HepG2 (cell line): ENCODE measurements at regions of chr6 and their contacts with region 1.

Region 1: GRCh38 chr6:44475779-44476434 is 88.4 kb downstream of the CDC5L start:
- DNase-seq: peak; percentile 59
- ATAC-seq: peak; percentile 95
- H3K4me3 ChIP-seq: peak overlapping the region; percentile 32 to 74 (median 34); a peak in 5 of 6 replicates
- H3K27ac ChIP-seq: no peak overlapping the region
- H3K4me1 ChIP-seq: peaks cover 9% of the 10 kb centered on the region; the same call in 1 of the 2 replicates
- H3K27me3 ChIP-seq: peaks cover 11 to 89% of the 10 kb centered on the region in 2 experiments; a peak in 4 of 5 replicates
- CTCF ChIP-seq: peak; percentile 100
- EP300 ChIP-seq: no peak
- POLR2A ChIP-seq: no peak
- RAD21 ChIP-seq: peak; percentile 96

Region 2: GRCh38 chr6:44494011-44494501 is 18.1 kb after region 1 on chr6:
- CTCF ChIA-PET with region 1: interaction called, 15 read pairs
- POLR2A ChIA-PET with region 1: no interaction called
- in situ Hi-C with region 1: no loop called
- intact Hi-C with region 1: loop called (anchors 2 kb)
- DNase-seq: peak; percentile 80
- ATAC-seq: peak; percentile 95
- H3K4me3 ChIP-seq: no peak overlapping the region
- H3K27ac ChIP-seq: no peak overlapping the region
- H3K4me1 ChIP-seq: peaks cover 13% of the 10 kb centered on the region
- H3K27me3 ChIP-seq: peaks cover 4 to 39% of the 10 kb centered on the region in 2 experiments; a peak in 4 of 5 replicates
- CTCF ChIP-seq: peak; percentile 73
- EP300 ChIP-seq: no peak
- POLR2A ChIP-seq: no peak
- RAD21 ChIP-seq: no peak

Region 3: GRCh38 chr6:44593539-44593944 is 117.6 kb after region 1 on chr6:
- CTCF ChIA-PET with region 1: no interaction called
- POLR2A ChIA-PET with region 1: no interaction called
- in situ Hi-C with region 1: no loop called
- intact Hi-C with region 1: loop called (anchors 5 kb)
- DNase-seq: peak; percentile 68
- ATAC-seq: peak; percentile 84
- H3K4me3 ChIP-seq: no peak overlapping the region
- H3K27ac ChIP-seq: no peak overlapping the region
- H3K4me1 ChIP-seq: no peaks in the 10 kb centered on the region
- H3K27me3 ChIP-seq: peaks cover 0 to 2% of the 10 kb centered on the region in 2 experiments; a peak in 2 of 5 replicates
- CTCF ChIP-seq: peak; percentile 66
- EP300 ChIP-seq: no peak
- POLR2A ChIP-seq: no peak
- RAD21 ChIP-seq: no peak

Region 4: DNA sequence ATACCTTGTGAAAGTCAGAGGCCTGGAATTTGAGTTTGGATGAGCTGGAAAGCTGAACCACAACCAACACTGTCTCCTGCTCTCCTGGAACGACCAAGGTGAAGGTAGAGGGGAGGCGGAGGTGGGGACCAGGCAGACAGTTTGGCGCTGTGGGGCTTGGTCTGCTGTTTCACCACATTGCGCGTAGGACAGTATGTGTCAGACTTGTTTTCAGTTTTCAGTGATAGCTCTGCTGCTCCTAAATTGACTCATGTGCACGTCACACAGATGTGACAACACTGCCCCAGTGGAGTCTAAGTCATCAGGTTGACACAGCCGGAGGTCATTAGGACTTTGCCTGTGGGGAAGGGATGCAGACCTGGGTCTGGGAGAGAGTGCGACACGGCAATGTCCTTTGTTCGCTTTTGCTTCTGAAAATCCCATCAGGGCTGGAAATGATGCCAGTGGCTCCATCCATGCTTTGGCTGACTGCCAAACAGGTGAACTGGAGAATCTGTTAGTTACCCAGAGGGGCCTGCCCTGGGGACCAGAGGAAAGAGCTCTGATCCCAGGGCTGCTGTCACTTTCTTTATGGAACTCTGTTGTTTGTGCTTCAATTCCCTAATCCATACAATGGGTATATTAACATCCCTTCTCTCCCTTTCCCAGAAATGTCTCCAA is 167.1 kb after region 1 on chr6:
- CTCF ChIA-PET with region 1: interaction called, 7 read pairs
- POLR2A ChIA-PET with region 1: no interaction called
- in situ Hi-C with region 1: loop called (anchors 10 kb)
- intact Hi-C with region 1: loop called (anchors 1 kb)
- DNase-seq: no peak
- ATAC-seq: no peak
- H3K4me3 ChIP-seq: no peak overlapping the region
- H3K27ac ChIP-seq: no peak overlapping the region
- H3K4me1 ChIP-seq: no peaks in the 10 kb centered on the region
- H3K27me3 ChIP-seq: peaks cover 1 to 7% of the 10 kb centered on the region in 2 experiments; a peak in 3 of 5 replicates
- CTCF ChIP-seq: no peak
- EP300 ChIP-seq: no peak
- POLR2A ChIP-seq: no peak
- RAD21 ChIP-seq: no peak